GM12878 (cell line): ENCODE measurements at regions of chr11 and their contacts with region 1.

Region 1: DNA sequence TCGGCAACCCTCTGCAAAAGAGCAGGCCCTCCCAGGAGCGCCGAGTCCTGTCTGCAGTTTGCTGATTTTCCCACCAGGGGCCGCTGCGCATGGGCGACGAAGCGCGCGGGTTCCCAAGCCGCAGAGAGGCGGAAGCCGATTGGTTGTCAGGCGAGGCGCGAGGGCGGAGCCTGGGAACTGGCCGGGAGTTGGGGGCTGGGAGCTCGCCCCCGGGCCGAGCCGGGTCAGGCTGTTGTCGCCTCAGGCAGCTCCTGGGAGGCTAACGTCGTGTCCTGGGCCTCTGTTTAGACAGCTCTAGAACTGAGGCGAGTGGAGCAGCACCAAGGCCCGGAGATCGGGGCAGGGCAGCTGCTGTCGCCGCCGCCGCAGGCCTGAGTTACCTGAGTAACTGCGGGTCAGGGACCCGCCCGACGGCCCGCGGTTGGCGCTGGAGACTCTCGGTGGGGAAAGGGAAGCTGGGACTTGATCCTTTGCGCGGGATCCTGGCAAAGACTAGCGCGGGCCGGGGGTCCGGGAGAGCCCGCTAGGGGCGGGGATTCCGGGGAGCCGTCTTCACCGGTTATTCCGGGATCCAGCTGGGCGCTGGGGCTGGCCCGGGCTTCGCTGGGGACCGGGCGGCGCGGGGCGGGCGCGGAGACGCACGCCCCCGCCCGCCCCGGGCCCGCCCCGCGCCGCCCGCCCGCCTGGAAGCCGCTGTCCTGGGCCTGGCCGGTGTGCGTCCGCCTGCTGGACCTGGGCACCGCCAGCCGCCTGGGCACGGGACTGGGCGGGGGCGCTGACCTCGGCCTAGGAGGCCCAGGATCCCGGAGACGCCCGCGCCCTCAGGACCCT is at the start of gene STIM1:
- DNase-seq: peak; percentile 88
- ATAC-seq: peak; percentile 76
- H3K4me3 ChIP-seq: peak within 1 kb of the TSS; percentile 94
- H3K27ac ChIP-seq: peak within 1 kb of the TSS; percentile 97
- H3K4me1 ChIP-seq: peaks cover 32% of the 10 kb centered on the region
- H3K27me3 ChIP-seq: no peaks in the 10 kb centered on the region
- CTCF ChIP-seq: peak; percentile 87 to 98 (median 93); a peak in 5 of 6 replicates
- EP300 ChIP-seq: no peak
- POLR2A ChIP-seq: peak; percentile 72
- RAD21 ChIP-seq: peak; percentile 92
- polyA plus RNA-seq, gene STIM1: 8.6 to 9.9 TPM

Region 2: GRCh38 chr11:3747684-3748083 is 107.5 kb before region 1 on chr11:
- CTCF ChIA-PET with region 1: no interaction called
- POLR2A ChIA-PET with region 1: no interaction called
- RAD21 ChIA-PET with region 1: no interaction called
- SMC1A ChIA-PET with region 1: no interaction called
- in situ Hi-C with region 1: no loop called
- intact Hi-C with region 1: no loop called
- DNase-seq: no peak
- ATAC-seq: no peak
- H3K4me3 ChIP-seq: no peak overlapping the region
- H3K27ac ChIP-seq: no peak overlapping the region
- H3K4me1 ChIP-seq: no peaks in the 10 kb centered on the region
- H3K27me3 ChIP-seq: no peaks in the 10 kb centered on the region
- CTCF ChIP-seq: no peak
- EP300 ChIP-seq: no peak
- POLR2A ChIP-seq: no peak
- RAD21 ChIP-seq: no peak

Region 3: DNA sequence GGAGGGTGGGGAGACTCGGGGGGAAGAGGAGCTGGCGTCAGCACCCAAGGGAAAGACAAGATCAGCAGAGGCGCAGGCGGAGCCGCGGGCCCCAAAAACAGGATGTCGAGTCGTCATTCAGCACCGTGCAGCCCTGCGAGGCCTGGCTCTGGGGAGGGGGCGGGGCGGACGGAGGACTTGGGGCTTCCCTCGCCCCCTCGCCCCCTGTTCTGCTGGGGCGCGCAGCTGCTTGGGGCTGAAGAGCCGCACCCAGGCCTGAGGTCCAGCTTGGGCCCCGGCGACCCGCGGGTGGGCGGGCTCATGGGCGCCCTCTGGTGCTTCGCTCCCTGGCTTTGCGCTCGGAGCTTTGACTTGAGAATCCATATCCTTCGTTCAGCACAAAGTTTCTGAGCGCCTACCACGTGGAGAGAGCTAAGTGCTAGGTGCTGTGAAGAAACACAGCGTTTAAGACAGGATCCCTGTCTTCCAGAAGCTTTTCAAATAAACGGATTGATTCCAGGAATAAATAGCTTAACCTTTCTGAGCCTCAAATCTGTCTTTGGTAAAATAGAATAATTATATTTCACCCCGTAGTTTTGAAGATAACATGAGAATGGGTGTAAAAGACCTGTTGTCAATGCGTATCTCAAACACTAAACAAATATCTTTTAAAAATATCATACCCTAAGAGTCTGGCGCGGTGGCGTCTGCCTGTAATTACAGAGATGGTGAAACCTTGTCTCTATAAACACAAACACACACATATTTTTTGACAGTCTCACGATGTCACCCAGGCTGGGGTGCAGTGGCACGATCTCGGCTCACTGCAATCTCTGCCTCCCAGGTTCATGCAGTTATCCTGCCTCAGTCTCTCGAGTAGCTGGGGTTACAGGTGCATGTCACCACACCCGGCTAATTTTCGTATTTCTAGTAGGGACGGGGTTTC is 13.5 kb before region 1 on chr11:
- CTCF ChIA-PET with region 1: interaction called, 1,047 read pairs
- POLR2A ChIA-PET with region 1: interaction called, 242 read pairs
- RAD21 ChIA-PET with region 1: interaction called, 304 read pairs
- SMC1A ChIA-PET with region 1: interaction called, 188 read pairs
- in situ Hi-C with region 1: no loop called
- intact Hi-C with region 1: no loop called
- DNase-seq: peak; percentile 79
- ATAC-seq: peak; percentile 71
- H3K4me3 ChIP-seq: peak overlapping the region; percentile 98
- H3K27ac ChIP-seq: peak overlapping the region; percentile 82
- H3K4me1 ChIP-seq: peaks cover 15% of the 10 kb centered on the region
- H3K27me3 ChIP-seq: no peaks in the 10 kb centered on the region
- CTCF ChIP-seq: peak; percentile 78 to 88 (median 85)
- EP300 ChIP-seq: no peak
- POLR2A ChIP-seq: peak; percentile 71
- RAD21 ChIP-seq: peak; percentile 54

Region 4: GRCh38 chr11:3894128-3894731 is 39.0 kb after region 1 on chr11:
- CTCF ChIA-PET with region 1: interaction called, 47 read pairs
- POLR2A ChIA-PET with region 1: interaction called, 23 read pairs
- RAD21 ChIA-PET with region 1: interaction called, 134 read pairs
- SMC1A ChIA-PET with region 1: interaction called, 43 read pairs
- in situ Hi-C with region 1: no loop called
- intact Hi-C with region 1: loop called (anchors 1 kb)
- DNase-seq: peak; percentile 91
- ATAC-seq: peak; percentile 98
- H3K4me3 ChIP-seq: peak overlapping the region; percentile 70
- H3K27ac ChIP-seq: peak overlapping the region; percentile 98
- H3K4me1 ChIP-seq: peaks cover 23% of the 10 kb centered on the region
- H3K27me3 ChIP-seq: no peaks in the 10 kb centered on the region
- CTCF ChIP-seq: no peak
- EP300 ChIP-seq: peak; percentile 81 to 85
- POLR2A ChIP-seq: peak; percentile 56
- RAD21 ChIP-seq: peak; percentile 36; the same call in 1 of the 2 replicates

Region 5: DNA sequence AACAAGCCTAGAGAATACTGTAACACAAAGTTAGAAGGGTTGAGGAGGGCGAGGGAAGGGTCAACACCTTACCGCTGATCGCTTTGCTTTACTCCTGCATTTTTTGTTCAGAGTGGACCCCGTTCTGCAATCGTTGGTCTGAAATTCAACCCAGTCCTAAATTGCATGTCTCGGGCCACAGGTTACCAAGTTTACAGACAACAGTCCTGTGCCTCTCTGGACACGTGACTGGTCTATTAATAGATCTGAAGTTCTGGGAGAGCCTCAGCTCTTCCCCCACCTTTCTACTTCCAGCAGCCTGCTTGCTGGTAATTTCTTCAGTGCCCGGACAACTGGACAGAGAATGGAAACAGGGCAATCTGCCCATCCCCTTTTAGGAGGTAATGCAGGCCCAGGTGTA is 74.5 kb after region 1 on chr11:
- CTCF ChIA-PET with region 1: interaction called, 47 read pairs
- POLR2A ChIA-PET with region 1: interaction called, 16 read pairs
- RAD21 ChIA-PET with region 1: interaction called, 38 read pairs
- SMC1A ChIA-PET with region 1: interaction called, 39 read pairs
- in situ Hi-C with region 1: no loop called
- intact Hi-C with region 1: no loop called
- DNase-seq: no peak
- ATAC-seq: no peak
- H3K4me3 ChIP-seq: no peak overlapping the region
- H3K27ac ChIP-seq: no peak overlapping the region
- H3K4me1 ChIP-seq: peaks cover 14% of the 10 kb centered on the region
- H3K27me3 ChIP-seq: no peaks in the 10 kb centered on the region
- CTCF ChIP-seq: no peak
- EP300 ChIP-seq: no peak
- POLR2A ChIP-seq: no peak
- RAD21 ChIP-seq: no peak

Region 6: GRCh38 chr11:3959015-3959919 is 104.1 kb after region 1 on chr11:
- CTCF ChIA-PET with region 1: interaction called, 51 read pairs
- POLR2A ChIA-PET with region 1: interaction called, 3 read pairs
- RAD21 ChIA-PET with region 1: interaction called, 41 read pairs
- SMC1A ChIA-PET with region 1: interaction called, 32 read pairs
- in situ Hi-C with region 1: no loop called
- intact Hi-C with region 1: no loop called
- DNase-seq: no peak
- ATAC-seq: peak; percentile 89
- H3K4me3 ChIP-seq: no peak overlapping the region
- H3K27ac ChIP-seq: no peak overlapping the region
- H3K4me1 ChIP-seq: peaks cover 4% of the 10 kb centered on the region; the same call in 1 of the 2 replicates
- H3K27me3 ChIP-seq: no peaks in the 10 kb centered on the region
- CTCF ChIP-seq: peak; percentile 25 to 32 (median 30); a peak in 3 of 6 replicates
- EP300 ChIP-seq: no peak
- POLR2A ChIP-seq: no peak
- RAD21 ChIP-seq: peak; percentile 41; the same call in 1 of the 2 replicates

Region 7: GRCh38 chr11:4060182-4060923 is 205.2 kb after region 1 on chr11:
- CTCF ChIA-PET with region 1: interaction called, 979 read pairs
- POLR2A ChIA-PET with region 1: interaction called, 12 read pairs
- RAD21 ChIA-PET with region 1: interaction called, 605 read pairs
- SMC1A ChIA-PET with region 1: interaction called, 805 read pairs
- in situ Hi-C with region 1: no loop called
- intact Hi-C with region 1: no loop called
- DNase-seq: no peak
- ATAC-seq: no peak
- H3K4me3 ChIP-seq: no peak overlapping the region
- H3K27ac ChIP-seq: no peak overlapping the region
- H3K4me1 ChIP-seq: peaks cover 19% of the 10 kb centered on the region
- H3K27me3 ChIP-seq: no peaks in the 10 kb centered on the region
- CTCF ChIP-seq: no peak
- EP300 ChIP-seq: no peak
- POLR2A ChIP-seq: no peak
- RAD21 ChIP-seq: no peak

Region 8: GRCh38 chr11:5684646-5685362 is 1829.6 kb after region 1 on chr11 and contains the start of gene TRIM5:
- CTCF ChIA-PET with region 1: no interaction called
- POLR2A ChIA-PET with region 1: no interaction called
- RAD21 ChIA-PET with region 1: no interaction called
- SMC1A ChIA-PET with region 1: no interaction called
- in situ Hi-C with region 1: loop called (anchors 25 kb)
- intact Hi-C with region 1: no loop called
- DNase-seq: peak; percentile 86
- ATAC-seq: peak; percentile 87
- H3K4me3 ChIP-seq: peak within 1 kb of the TSS; percentile 87
- H3K27ac ChIP-seq: peak within 1 kb of the TSS; percentile 94
- H3K4me1 ChIP-seq: peaks cover 8% of the 10 kb centered on the region
- H3K27me3 ChIP-seq: no peaks in the 10 kb centered on the region
- CTCF ChIP-seq: peak; percentile 74 to 78 (median 76)
- EP300 ChIP-seq: peak in 1 of 2 experiments; percentile 15; a peak in 1 of 4 replicates
- POLR2A ChIP-seq: peak; percentile 60; the same call in 1 of the 2 replicates
- RAD21 ChIP-seq: peak; percentile 80
- polyA plus RNA-seq, gene TRIM5: 20.0 to 21.8 TPM